HepG2 (cell line): ENCODE measurements at regions of chr10 and their contacts with region 1.

Region 1: GRCh38 chr10:102352066-102352715 is 43.3 kb upstream of the NFKB2 start:
- DNase-seq: peak; percentile 51
- ATAC-seq: peak; percentile 80
- H3K4me3 ChIP-seq: no peak overlapping the region
- H3K27ac ChIP-seq: no peak overlapping the region
- H3K4me1 ChIP-seq: no peaks in the 10 kb centered on the region
- H3K27me3 ChIP-seq: no peaks in the 10 kb centered on the region
- CTCF ChIP-seq: peak; percentile 84
- EP300 ChIP-seq: no peak
- POLR2A ChIP-seq: no peak
- RAD21 ChIP-seq: peak; percentile 61

Region 2: DNA sequence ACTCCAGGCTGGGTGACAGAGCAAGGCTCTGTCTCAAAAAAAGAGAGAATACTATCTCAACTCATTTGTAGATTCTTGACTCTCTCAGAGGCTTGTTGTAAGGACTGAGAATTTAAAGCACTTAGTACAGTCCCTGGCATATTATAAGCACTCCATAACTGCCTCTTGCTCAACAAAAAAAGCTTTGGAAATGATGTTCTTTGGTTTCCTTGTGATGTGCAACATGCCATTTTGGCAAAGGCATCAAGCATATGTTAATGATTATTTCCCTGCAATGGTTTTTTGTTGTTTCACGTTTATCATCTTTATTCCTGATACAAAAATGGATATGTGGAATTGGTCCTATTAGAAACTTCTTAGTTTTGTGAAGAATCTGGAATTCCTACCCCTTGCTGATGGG is 184.3 kb before region 1 on chr10:
- CTCF ChIA-PET with region 1: interaction called, 10 read pairs
- POLR2A ChIA-PET with region 1: no interaction called
- in situ Hi-C with region 1: no loop called
- intact Hi-C with region 1: loop called (anchors 1 kb)
- DNase-seq: no peak
- ATAC-seq: no peak
- H3K4me3 ChIP-seq: no peak overlapping the region
- H3K27ac ChIP-seq: no peak overlapping the region
- H3K4me1 ChIP-seq: 0 out of 2 replicates have a peak, but pooled peaks cover 5% of the 10 kb centered on the region
- H3K27me3 ChIP-seq: 0 out of 5 replicates have a peak, but pooled peaks cover 0 to 6% of the 10 kb centered on the region in 2 experiments
- CTCF ChIP-seq: no peak
- EP300 ChIP-seq: no peak
- POLR2A ChIP-seq: no peak
- RAD21 ChIP-seq: no peak

Region 3: GRCh38 chr10:102225646-102226541 is 126.3 kb before region 1 on chr10 and contains the start of gene ELOVL3:
- CTCF ChIA-PET with region 1: interaction called, 34 read pairs
- POLR2A ChIA-PET with region 1: interaction called, 6 read pairs
- in situ Hi-C with region 1: loop called (anchors 5 kb)
- intact Hi-C with region 1: loop called (anchors 1 kb)
- DNase-seq: peak; percentile 90
- ATAC-seq: peak; percentile 93
- H3K4me3 ChIP-seq: peak within 1 kb of the TSS; percentile 46 to 72 (median 59)
- H3K27ac ChIP-seq: no peak within 1 kb of the TSS
- H3K4me1 ChIP-seq: peaks cover 31% of the 10 kb centered on the region
- H3K27me3 ChIP-seq: peaks cover 0 to 31% of the 10 kb centered on the region in 2 experiments; a peak in 3 of 5 replicates
- CTCF ChIP-seq: no peak
- EP300 ChIP-seq: no peak
- POLR2A ChIP-seq: no peak; a peak in 1 of 4 replicates
- RAD21 ChIP-seq: peak; percentile 20
- total RNA-seq, gene ELOVL3: 0.24 and 0.69 TPM in 2 replicates

Region 4: DNA sequence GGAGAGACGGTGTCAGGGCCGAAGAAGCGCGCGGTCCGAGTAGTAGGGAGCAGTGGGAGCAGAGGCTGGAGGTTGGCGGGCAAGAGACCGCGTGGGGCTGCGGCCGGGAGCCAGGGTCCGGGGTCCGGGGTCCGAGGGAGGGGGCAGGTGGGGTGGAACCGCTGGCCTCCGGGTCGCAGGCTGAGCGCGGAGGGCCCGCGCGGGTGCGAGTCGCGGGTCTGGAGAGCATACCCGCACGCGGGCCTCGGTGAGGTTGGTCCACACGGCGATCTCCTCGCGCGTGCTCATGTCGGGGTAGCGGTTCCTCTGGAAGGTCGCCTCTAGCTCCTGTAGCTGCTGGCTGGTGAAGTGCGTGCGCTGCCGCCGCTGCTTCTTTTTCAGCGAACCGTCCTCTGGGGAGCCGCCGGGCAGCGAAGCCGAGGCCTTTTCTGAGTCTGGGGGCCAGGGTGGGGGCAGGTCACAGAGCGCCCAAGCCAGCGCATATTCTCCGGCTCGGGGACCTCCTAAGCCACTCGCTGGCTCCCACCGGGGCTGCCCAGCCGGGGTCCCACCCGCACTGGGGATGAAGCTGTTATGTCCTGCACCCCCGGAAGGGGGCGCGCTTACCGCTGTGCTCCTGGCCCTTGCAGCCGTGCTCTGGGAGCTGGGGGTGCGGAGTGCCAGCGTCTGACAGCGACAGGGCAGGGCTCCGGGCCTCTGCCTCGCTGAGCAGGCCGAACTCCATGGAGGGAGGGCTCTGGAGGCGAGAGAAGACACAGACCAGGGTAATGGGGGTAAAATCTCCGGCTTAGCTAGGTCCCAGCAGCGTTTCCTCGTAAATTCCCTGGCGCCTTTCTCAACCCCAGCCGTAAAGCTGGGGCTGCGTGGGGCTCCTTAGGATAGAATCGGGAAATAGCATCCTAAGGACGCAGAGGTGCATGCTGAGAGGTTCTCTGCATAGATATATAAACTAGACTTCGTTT is 120.6 kb before region 1 on chr10:
- CTCF ChIA-PET with region 1: interaction called, 34 read pairs
- POLR2A ChIA-PET with region 1: interaction called, 6 read pairs
- in situ Hi-C with region 1: loop called (anchors 5 kb)
- intact Hi-C with region 1: loop called (anchors 1 kb)
- DNase-seq: peak; percentile 38
- ATAC-seq: peak; percentile 74
- H3K4me3 ChIP-seq: peak overlapping the region; percentile 39 to 72 (median 65); a peak in 4 of 6 replicates
- H3K27ac ChIP-seq: no peak overlapping the region
- H3K4me1 ChIP-seq: peaks cover 45% of the 10 kb centered on the region
- H3K27me3 ChIP-seq: peaks cover 1 to 54% of the 10 kb centered on the region in 2 experiments; a peak in 4 of 5 replicates
- CTCF ChIP-seq: peak; percentile 96
- EP300 ChIP-seq: no peak
- POLR2A ChIP-seq: no peak
- RAD21 ChIP-seq: peak; percentile 78

Region 5: DNA sequence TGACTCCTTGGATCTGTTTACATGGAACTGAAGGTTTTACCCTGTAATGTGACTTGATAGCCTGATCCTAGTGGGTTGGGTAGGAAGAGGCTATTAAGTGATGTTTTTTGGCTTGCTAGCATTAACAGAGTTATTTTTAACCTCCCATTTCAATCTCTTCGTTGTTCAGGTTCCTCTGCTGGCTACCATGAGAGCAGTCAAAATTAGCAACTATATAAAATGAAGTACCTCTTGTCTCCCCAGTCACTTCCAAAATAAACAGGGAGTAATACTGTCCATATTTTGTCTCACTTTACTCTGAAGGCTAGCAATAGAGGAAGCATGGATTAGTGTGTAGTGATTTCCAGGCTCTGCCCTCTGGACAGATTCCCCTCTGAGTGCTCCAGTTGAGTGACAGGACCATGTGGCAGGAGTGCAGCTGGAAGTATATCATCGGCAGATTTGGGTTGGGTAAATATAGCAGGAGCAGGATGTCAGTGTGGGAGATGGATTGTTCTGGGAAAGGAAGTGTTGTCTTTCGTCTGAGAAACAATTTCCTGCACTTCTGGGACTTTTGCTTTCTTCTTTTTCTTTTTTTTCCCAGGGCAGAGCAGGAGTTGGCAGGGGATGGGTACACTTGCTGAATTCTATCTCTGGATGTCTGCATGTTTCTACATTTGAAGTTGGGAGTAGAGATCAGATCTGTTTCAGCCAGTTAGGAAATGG is 71.6 kb before region 1 on chr10:
- CTCF ChIA-PET with region 1: no interaction called
- POLR2A ChIA-PET with region 1: no interaction called
- in situ Hi-C with region 1: no loop called
- intact Hi-C with region 1: no loop called
- DNase-seq: no peak
- ATAC-seq: no peak
- H3K4me3 ChIP-seq: no peak overlapping the region
- H3K27ac ChIP-seq: no peak overlapping the region
- H3K4me1 ChIP-seq: peaks cover 9% of the 10 kb centered on the region
- H3K27me3 ChIP-seq: no peaks in the 10 kb centered on the region
- CTCF ChIP-seq: no peak
- EP300 ChIP-seq: no peak
- POLR2A ChIP-seq: no peak
- RAD21 ChIP-seq: no peak